ENCODE measurements at regions of chr6 and their contacts with region 1.

Region 1: DNA sequence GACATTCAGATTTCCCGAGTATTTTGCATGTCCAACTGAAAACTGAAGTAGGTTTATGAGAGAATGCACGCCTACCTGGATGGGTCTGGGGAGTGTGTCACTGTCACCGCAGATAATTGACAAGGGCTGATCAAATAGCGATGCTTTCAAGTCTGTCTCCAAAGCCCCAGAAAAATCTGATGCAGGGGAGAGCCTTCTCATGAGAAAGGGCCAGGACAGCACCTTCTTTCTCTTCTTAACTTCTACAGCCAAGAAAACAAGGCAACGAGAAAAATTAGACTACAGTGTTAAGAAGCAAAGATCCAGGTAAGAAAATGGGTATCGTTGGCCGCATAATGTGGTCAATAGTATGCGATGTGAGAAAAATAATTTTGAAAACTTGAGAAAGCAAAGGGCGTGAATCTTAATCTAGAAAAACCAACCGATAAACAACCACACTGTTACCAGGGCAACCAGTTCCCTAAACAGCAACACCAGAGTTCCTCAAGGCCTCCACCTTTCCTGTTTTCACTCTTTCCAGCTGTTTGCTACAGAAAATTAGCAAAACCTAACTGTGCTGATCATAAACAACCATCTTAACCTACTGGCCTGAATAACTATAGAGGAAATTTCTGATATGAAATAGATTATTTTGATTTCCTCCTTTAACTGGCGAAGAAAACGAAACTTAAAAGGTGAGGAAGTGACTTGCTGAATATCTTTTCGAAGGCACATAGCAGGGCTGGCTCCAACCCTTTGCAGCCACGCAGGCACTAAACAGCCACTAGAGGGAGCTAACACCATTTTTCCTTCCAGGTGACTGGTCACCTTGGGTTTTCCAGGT is 2.6 kb downstream of the TAGAP start:
- DNase-seq: peak; percentile 68 to 84 (median 76)
- ATAC-seq: peak; percentile 93 to 98 (median 96)
- H3K4me3 ChIP-seq: peak overlapping the region in 1 of 4 donors; percentile 19
- H3K27ac ChIP-seq: peak overlapping the region in 2 of 4 donors; percentile 40 to 43
- H3K4me1 ChIP-seq: peaks cover 0 to 3% (median 0%) of the 10 kb centered on the region in 3 donors
- H3K27me3 ChIP-seq: peaks cover 0 to 3% (median 0%) of the 10 kb centered on the region in 4 donors
- CTCF ChIP-seq: peak; percentile 95 to 98 (median 96)

Region 2: DNA sequence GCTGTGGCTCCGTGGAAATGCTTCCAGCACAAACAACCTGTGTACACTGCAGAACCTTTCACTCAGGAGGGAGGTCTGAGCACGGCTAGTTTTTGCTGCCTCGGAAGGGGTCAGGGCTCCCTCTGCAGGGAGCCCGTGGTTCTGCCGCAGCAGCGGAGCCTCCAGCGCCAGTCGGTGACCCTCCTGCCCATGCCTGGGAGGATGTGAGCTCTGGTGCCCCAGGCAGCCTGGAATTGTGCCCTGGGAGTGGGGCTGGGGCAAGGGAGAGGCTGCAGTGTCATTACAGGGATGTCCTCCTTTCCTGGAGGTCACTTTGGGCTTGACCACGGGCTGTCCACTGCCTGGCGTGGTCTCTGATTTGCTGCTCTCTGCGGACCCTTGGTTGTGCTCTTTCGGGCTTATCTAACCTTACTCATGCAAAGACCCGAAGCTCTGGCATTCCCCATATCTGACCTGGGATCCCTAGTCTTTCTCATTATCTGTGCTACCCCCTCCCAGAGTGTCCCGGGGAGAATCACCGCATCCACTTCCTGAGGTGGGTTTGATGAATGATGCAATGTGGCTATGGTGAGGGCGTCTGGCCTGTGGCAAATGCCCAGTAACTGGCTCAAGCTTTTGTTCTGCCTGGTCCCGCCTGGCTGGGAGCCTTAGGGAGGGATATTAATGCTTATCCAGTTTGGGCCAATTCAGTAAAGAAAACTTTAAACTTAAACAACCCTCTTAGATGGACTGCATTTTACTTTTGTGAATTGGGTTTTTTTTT is 62.1 kb after region 1 on chr6:
- intact Hi-C with region 1: loop called in 2 of 3 experiments (anchors 10 kb)
- DNase-seq: peak; percentile 51 to 85 (median 66)
- ATAC-seq: peak; percentile 78 to 93 (median 92)
- H3K4me3 ChIP-seq: no peak overlapping the region
- H3K27ac ChIP-seq: no peak overlapping the region
- H3K4me1 ChIP-seq: no peaks in the 10 kb centered on the region
- H3K27me3 ChIP-seq: peaks cover 0 to 5% (median 0%) of the 10 kb centered on the region in 4 donors
- CTCF ChIP-seq: peak; percentile 66 to 90 (median 84)

Measured in pancreas (tissue), 10 donors.